Left cardiac atrium (tissue), 4 donors: ENCODE measurements at regions of chr9 and their contacts with region 1.

Region 1: DNA sequence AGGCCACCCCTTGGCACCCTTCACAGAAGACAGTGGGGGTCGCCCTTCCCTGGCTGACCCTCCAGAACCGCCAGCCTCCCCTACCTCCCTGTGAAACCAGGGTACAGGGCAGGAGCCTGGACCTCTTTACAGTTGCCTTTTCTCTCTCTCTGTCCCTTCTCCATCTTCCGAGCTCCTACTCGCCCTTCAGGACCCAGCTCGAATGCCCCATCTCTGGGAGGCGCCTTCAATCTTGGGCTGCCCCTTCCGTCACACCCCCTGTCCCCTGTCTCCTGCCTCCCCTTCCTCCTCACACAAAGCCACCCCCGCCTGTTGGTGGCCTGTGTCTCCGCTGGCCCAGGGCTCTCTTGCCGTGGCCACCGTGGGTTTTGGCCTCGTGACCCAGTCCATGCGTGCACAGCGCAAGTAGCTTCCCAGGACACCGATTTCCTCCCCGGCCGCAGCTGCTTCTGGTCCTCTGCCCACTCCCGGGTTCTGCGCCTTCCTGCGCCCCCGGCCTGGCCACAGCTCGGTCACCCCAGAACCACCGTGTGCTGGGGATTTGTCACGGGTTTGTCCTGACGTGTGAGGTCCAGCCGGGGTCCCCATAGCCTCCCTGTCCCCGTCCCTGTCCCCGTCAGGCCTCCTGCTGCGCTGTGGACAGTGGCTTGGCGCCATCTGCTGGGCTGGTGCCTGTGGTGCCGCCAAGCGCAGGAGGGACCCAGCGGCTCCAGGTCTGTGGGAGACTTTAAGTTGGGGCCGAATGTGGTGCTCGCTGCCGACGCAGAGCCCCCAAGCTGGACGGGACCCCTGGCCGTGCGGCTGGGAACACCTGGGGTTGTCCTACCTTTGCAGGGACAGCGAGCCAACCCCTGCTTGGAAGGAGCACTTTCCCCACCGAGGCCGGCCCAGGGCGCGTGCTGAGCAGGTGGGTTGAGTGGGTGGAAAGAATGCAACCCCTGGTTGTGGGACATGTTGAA is 4.0 kb upstream of the TMEM250 start:
- DNase-seq: peak; percentile 81
- ATAC-seq: peak; percentile 13 to 30

Region 2: DNA sequence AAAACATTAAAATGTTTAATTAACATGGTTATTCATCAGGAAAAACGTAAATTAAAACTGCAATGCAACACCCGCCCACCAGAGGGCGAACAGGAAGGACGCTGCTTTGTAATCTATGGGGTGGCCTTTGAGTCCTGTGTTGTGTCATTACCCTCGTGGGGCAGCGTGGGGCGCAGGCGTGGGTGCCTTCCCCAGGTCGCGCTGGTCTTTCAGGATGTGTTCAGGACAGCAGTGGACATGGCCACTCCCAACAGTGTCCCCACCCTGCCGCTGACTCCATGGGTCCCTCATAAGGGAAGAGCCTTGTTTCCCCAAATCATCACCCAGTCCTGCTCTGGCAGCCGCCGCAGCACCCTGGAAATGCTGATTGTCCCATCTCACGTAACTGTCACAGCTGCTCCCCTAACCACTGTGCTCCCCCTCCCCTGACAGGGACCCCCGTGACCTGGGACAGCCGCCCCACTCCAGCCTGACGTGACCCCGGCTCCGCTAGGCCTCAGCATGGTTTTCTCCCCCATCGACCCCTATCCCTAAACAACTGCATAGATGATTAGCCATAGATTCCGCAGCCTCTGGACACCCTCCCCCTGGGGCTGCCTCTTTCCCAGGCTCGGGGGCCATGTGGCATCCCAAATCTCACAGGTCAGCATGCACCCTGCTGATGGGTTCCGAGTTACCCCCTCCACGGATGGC is 519.8 kb before region 1 on chr9:
- intact Hi-C with region 1: loop called in 1 of 2 experiments (anchors 5 kb)
- DNase-seq: no peak
- ATAC-seq: peak; percentile 17 to 23

Region 3: DNA sequence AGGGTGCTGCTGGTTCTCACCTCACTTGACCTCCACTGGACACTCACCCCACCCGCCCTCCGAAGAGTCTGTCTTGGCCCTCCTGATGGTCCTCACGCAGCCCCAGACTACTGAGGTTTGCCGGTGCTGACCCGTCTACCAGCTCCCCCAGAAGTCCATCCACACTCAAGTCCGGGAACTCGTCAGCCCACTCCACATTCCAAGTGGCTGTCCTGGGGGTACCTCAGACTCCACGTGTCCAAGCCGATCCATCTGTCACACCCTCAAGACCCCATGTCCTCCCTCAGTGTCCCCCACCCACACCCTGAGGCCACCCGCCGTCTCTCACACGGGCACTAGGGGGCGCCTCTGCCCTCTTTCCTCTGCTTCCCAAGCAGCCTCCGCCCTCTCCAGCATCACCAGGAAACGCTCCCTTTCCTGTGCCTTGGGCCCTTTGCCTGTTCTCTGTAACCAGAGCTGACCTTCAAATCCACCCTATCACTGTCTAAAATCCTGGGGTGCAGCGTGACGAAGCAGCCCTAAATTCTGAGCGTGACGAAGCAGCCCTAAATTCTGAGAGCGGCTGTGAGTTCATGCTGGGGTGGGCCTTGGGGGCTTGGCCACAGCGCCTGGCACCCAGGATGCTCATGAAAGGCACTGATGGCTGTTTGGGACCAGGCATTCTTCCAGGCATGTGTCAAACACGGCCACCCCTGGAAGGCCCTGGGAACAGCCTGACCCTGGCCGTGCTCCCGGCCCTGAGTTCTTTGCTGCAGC is 325.0 kb before region 1 on chr9:
- intact Hi-C with region 1: loop called in 1 of 2 experiments (anchors 10 kb)
- DNase-seq: peak; percentile 61
- ATAC-seq: peak; percentile 57 to 61

Region 4: DNA sequence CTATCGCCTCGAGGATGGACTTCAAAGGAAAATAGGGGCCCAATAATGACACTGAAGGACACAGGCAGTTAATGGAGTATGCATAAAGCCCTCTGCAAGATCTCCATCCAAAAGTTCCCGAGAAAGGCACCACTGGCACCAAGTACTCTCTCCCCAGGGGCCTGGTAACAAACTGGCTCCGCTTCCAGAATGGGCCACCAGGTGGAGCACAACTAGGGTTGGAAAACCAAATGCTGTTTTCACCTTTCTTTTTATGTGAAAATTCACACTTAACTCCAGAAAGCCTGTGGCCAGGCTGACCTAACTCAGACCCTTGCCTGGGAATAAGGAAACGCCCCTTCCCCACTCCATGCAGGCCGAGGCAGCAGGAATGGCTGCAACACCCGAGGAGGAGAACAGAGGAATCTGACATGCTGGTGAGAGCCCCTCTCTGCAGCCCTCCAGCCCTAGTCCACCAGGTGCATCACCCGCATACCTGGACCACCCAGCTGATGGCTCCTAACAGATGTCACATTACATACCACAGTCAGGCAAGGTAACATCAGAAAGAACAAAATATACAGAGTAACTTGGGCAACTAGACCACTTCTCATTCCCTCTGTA is 258.2 kb before region 1 on chr9:
- intact Hi-C with region 1: loop called in 1 of 2 experiments (anchors 2 kb)
- DNase-seq: peak; percentile 62
- ATAC-seq: peak in 1 of 2 donors; percentile 38

Region 5: DNA sequence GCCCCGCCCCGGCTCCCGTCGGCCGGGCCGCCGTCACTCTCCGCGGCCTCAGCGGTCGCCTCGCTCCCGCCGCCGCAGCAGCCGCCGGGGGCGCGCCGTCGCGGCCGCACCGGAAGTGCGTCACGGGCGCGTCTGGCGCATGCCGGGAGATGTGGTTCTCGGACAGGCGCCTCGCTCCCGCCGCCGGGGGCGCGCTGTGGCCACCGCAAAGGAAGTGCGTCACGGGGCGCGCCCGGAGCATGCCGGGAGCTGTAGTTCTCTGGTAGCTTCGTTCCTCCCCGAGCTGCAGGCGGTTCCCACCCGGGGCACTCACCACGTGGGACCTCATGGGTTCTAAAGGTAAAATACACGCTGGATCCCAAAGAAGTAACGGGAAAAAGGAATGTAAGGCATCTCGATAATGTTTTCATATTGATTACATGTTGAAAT is 161.4 kb before region 1 on chr9 and contains the start of gene UBAC1:
- intact Hi-C with region 1: loop called in 1 of 2 experiments (anchors 2 kb)
- DNase-seq: peak; percentile 98
- ATAC-seq: peak; percentile 92 to 94
- total RNA-seq, gene UBAC1: 64.9 to 65.7 TPM

Region 6: DNA sequence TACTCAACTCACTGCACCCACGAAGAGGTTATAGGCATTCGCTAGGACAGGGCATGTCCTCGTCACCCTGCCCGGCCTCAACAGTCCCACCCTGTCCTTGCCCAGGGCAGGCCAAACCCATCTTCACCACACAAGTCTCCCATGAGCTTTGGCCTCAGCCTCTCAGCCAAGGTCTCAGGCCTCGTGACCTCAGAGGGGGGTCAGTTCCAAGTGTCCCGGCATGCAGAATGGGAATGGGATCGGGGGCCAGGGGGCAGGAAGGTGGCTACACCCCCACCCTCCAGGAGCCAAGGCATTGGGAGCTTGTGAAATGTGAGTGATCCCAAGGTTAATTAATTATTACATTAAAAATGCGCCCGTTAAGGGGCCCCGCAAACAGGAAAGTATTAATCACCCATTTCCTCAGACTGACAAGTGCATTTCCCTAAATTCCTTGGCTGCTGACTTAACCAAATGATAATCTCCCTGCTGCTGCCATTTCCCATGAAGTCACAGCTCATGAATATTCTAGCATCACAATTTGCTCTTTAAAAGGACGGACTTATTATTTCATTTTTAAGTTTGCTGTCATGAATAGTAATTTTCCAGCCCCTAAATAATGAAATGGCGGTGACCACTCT is 153.5 kb before region 1 on chr9:
- intact Hi-C with region 1: loop called (anchors 2 kb)
- DNase-seq: no peak
- ATAC-seq: no peak

Region 7: DNA sequence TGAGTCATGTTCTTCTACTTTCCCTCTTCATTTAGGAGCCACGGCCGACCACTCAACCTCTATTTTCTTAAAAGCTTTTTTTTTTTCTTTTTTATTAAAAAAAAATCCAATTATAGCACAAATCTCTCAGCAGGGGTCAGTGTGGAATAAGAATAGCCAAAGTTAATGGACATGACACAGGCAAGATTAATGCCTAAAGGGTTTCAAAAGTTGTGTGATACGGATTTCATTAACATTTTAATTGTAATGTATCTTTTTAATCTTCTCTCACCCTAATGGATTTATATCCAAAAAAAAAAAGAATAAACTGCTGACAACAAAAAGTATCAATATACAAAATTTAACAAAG is 33.0 kb before region 1 on chr9:
- intact Hi-C with region 1: loop called in 1 of 2 experiments (anchors 5 kb)
- DNase-seq: no peak
- ATAC-seq: no peak